Mammary epithelial cell (primary cell): ENCODE measurements at regions of chr20 and their contacts with region 1.

Region 1: GRCh38 chr20:63698739-63699465 is 2.5 kb downstream of the TNFRSF6B start:
- DNase-seq: peak; percentile 94
- H3K4me3 ChIP-seq: peak overlapping the region; percentile 47 to 72 (median 47)
- H3K27ac ChIP-seq: peak overlapping the region; percentile 60
- H3K4me1 ChIP-seq: peaks cover 72% of the 10 kb centered on the region
- H3K27me3 ChIP-seq: no peaks in the 10 kb centered on the region
- CTCF ChIP-seq: no peak

Region 2: GRCh38 chr20:63495741-63496595 is 202.9 kb before region 1 on chr20:
- CTCF ChIA-PET with region 1: no interaction called
- dilution Hi-C with region 1: no loop called
- in situ Hi-C with region 1: no loop called
- intact Hi-C with region 1: no loop called
- DNase-seq: peak; percentile 35
- H3K4me3 ChIP-seq: peak overlapping the region in 1 of 3 experiments; percentile 28
- H3K27ac ChIP-seq: no peak overlapping the region
- H3K4me1 ChIP-seq: peaks cover 10% of the 10 kb centered on the region
- H3K27me3 ChIP-seq: peaks cover 5% of the 10 kb centered on the region
- CTCF ChIP-seq: peak; percentile 66 to 93

Region 3: GRCh38 chr20:63612276-63612928 is 86.5 kb before region 1 on chr20:
- CTCF ChIA-PET with region 1: no interaction called
- dilution Hi-C with region 1: loop called (anchors 5 kb)
- in situ Hi-C with region 1: no loop called
- intact Hi-C with region 1: no loop called
- DNase-seq: no peak
- H3K4me3 ChIP-seq: no peak overlapping the region
- H3K27ac ChIP-seq: no peak overlapping the region
- H3K4me1 ChIP-seq: no peaks in the 10 kb centered on the region
- H3K27me3 ChIP-seq: no peaks in the 10 kb centered on the region
- CTCF ChIP-seq: no peak

Region 4: DNA sequence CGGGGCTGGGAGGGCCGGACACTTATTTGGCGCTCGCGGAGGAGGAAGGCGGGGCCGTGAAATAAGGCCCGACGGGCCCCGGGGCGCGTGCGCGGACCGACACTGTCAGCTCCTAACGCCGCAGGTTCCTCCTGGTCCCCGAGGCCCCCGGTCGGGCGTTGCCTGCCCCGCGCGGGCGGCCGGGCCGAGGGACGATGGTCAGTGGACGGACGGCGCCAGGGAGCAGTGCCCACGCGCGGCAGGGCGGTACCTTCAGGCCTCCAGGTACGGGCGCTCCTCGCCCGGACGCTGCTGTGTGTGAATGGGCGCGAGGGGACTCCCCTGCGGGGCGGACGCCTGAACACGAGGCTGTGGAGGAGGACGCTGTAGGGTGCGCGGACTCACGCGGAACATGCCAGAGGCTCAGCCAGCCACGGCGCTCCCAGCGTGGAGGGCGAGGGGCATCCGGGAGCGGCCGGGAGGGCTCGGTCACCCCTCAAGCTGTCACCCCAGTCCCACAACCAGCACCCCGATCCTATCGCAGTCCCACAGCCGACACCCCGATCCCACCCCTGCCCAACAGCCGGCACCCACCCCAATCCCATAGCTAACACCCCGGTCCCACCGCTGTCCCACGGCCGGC is 71.7 kb before region 1 on chr20:
- CTCF ChIA-PET with region 1: no interaction called
- dilution Hi-C with region 1: no loop called
- in situ Hi-C with region 1: no loop called
- intact Hi-C with region 1: loop called (anchors 1 kb)
- DNase-seq: peak; percentile 94
- H3K4me3 ChIP-seq: peak overlapping the region; percentile 93 to 99 (median 97)
- H3K27ac ChIP-seq: peak overlapping the region; percentile 62
- H3K4me1 ChIP-seq: peaks cover 11% of the 10 kb centered on the region
- H3K27me3 ChIP-seq: no peaks in the 10 kb centered on the region
- CTCF ChIP-seq: no peak

Region 5: GRCh38 chr20:63657937-63658748 is 40.8 kb before region 1 on chr20 and contains the start of gene RTEL1:
- CTCF ChIA-PET with region 1: no interaction called
- dilution Hi-C with region 1: no loop called
- in situ Hi-C with region 1: no loop called
- intact Hi-C with region 1: loop called (anchors 2 kb)
- DNase-seq: peak; percentile 91
- H3K4me3 ChIP-seq: peak within 1 kb of the TSS; percentile 75 to 92 (median 92)
- H3K27ac ChIP-seq: peak within 1 kb of the TSS; percentile 47
- H3K4me1 ChIP-seq: peaks cover 20% of the 10 kb centered on the region
- H3K27me3 ChIP-seq: no peaks in the 10 kb centered on the region
- CTCF ChIP-seq: no peak
- total RNA-seq, gene RTEL1: 8.0 to 32.5 TPM

Region 6: GRCh38 chr20:63739130-63740069 is 40.5 kb after region 1 on chr20 and contains the start of gene SLC2A4RG:
- CTCF ChIA-PET with region 1: no interaction called
- dilution Hi-C with region 1: loop called (anchors 5 kb)
- in situ Hi-C with region 1: no loop called
- intact Hi-C with region 1: no loop called
- DNase-seq: peak; percentile 63
- H3K4me3 ChIP-seq: peak within 1 kb of the TSS; percentile 60 to 75 (median 64)
- H3K27ac ChIP-seq: no peak within 1 kb of the TSS
- H3K4me1 ChIP-seq: peaks cover 37% of the 10 kb centered on the region
- H3K27me3 ChIP-seq: no peaks in the 10 kb centered on the region
- CTCF ChIP-seq: no peak
- total RNA-seq, gene SLC2A4RG: 35.8 to 101 TPM

Region 7: GRCh38 chr20:63756648-63756991 is 57.7 kb after region 1 on chr20:
- CTCF ChIA-PET with region 1: no interaction called
- dilution Hi-C with region 1: no loop called
- in situ Hi-C with region 1: no loop called
- intact Hi-C with region 1: no loop called
- DNase-seq: no peak
- H3K4me3 ChIP-seq: no peak overlapping the region
- H3K27ac ChIP-seq: no peak overlapping the region
- H3K4me1 ChIP-seq: no peaks in the 10 kb centered on the region
- H3K27me3 ChIP-seq: no peaks in the 10 kb centered on the region
- CTCF ChIP-seq: no peak